ENCODE measurements at regions of chr2 and their contacts with region 1.

Region 1: DNA sequence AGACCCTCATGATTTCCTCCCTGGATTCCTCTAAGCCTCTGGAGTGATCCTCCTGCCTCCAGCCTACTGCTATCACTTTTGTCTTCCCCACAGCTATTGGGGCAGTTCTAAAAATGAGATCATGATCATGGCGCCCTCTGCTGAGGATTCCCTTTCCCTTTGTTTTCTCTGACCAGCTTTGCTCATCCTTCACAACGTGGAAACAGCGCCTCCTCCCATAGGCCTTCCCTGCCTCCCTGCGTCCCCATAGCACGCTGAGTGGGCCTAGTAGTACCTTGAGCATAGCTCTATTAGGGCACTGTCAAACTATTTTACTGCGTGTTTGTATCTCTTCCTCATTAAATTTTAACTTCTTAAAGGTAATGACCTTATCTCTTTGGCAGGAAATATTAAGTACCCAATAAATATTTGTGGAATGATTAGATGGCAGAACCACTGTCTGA is 207.0 kb upstream of the FANCL start:
- DNase-seq: peak; percentile 78 to 94 (median 82)
- H3K4me3 ChIP-seq: no peak overlapping the region
- H3K27ac ChIP-seq: no peak overlapping the region
- H3K4me1 ChIP-seq: no peaks in the 10 kb centered on the region
- H3K27me3 ChIP-seq: no peaks in the 10 kb centered on the region
- CTCF ChIP-seq: peak; percentile 46 to 75 (median 67)
- POLR2A ChIP-seq: no peak

Region 2: GRCh38 chr2:57759822-57760300 is 688.2 kb before region 1 on chr2:
- intact Hi-C with region 1: loop called in 1 of 2 experiments (anchors 10 kb)
- DNase-seq: peak; percentile 85 to 93 (median 88)
- H3K4me3 ChIP-seq: peak overlapping the region in 2 of 4 donors; percentile 12 to 41
- H3K27ac ChIP-seq: no peak overlapping the region
- H3K4me1 ChIP-seq: peaks cover 5 to 10% of the 10 kb centered on the region in 2 donors
- H3K27me3 ChIP-seq: no peaks in the 10 kb centered on the region
- CTCF ChIP-seq: peak; percentile 89 to 96 (median 94)
- POLR2A ChIP-seq: no peak

Region 3: GRCh38 chr2:57906152-57906732 is 541.8 kb before region 1 on chr2:
- intact Hi-C with region 1: loop called (anchors 5 to 10 kb)
- DNase-seq: peak in 1 of 7 donors; percentile 17
- H3K4me3 ChIP-seq: no peak overlapping the region
- H3K27ac ChIP-seq: no peak overlapping the region
- H3K4me1 ChIP-seq: no peaks in the 10 kb centered on the region
- H3K27me3 ChIP-seq: no peaks in the 10 kb centered on the region
- CTCF ChIP-seq: peak; percentile 72 to 93 (median 86)
- POLR2A ChIP-seq: no peak

Region 4: GRCh38 chr2:58740426-58740825 is 292.3 kb after region 1 on chr2:
- intact Hi-C with region 1: no loop called
- DNase-seq: no peak
- H3K4me3 ChIP-seq: no peak overlapping the region
- H3K27ac ChIP-seq: no peak overlapping the region
- H3K4me1 ChIP-seq: no peaks in the 10 kb centered on the region
- H3K27me3 ChIP-seq: no peaks in the 10 kb centered on the region
- CTCF ChIP-seq: no peak
- POLR2A ChIP-seq: no peak